Right cardiac atrium (tissue), 5 donors: ENCODE measurements at regions of chr1 and their contacts with region 1.

Region 1: GRCh38 chr1:59506952-59507351 is 210.1 kb downstream of the FGGY start:
- DNase-seq: peak in 1 of 3 donors; percentile 58
- ATAC-seq: peak; percentile 69 to 80
- H3K4me3 ChIP-seq: no peak overlapping the region
- H3K27ac ChIP-seq: no peak overlapping the region
- H3K4me1 ChIP-seq: no peaks in the 10 kb centered on the region
- H3K27me3 ChIP-seq: no peaks in the 10 kb centered on the region

Region 2: GRCh38 chr1:59699227-59699847 is 192.4 kb after region 1 on chr1:
- intact Hi-C with region 1: loop called in 1 of 4 experiments (anchors 10 kb)
- DNase-seq: no peak
- ATAC-seq: peak in 1 of 2 donors; percentile 44
- H3K4me3 ChIP-seq: no peak overlapping the region
- H3K27ac ChIP-seq: no peak overlapping the region
- H3K4me1 ChIP-seq: peaks cover 11% of the 10 kb centered on the region
- H3K27me3 ChIP-seq: no peaks in the 10 kb centered on the region